AG04449 (cell line): ENCODE measurements at regions of chr14 and their contacts with region 1.

Region 1: DNA sequence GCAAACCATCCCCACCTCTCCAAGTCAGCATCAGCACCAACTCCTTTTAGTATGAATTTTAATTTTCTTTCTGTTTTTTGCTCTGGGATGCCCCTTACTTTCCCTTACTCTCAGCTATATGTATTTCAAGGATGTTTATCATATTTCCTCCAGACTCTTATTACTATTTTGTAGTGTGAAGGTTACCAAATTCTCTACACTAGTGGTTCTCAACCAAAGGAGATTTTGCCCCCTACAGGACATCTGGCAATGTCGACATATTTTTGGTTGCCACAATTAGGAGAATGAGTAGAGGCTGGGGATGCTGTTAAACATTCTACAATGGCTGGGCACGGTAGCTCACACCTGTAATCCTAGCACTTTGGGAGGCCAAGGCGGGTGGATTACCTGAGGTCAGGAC is 29.1 kb upstream of the SOS2 start:
- DNase-seq: no peak
- H3K4me3 ChIP-seq: no peak overlapping the region
- CTCF ChIP-seq: peak; percentile 44

Region 2: DNA sequence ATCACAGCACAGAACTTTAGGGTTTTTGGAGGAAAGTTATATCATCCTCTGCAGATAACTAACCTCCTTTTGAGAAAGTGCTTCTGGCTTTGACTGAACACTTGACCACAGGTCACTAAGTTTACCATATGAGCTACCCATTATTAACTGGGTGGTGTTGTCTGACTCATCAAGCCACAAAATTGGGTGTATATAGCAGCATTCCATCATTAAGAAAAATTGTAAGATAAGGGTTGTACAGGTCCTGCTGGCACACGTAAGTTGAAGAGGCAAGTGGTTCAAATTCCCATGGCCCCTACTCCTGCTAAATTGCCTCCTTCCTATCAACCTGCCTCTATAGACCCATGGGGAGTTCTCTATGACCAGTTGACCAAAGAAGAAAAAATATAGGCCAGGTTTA is 12.0 kb after region 1 on chr14:
- CTCF ChIA-PET with region 1: interaction called, 15 read pairs
- POLR2A ChIA-PET with region 1: no interaction called
- DNase-seq: no peak
- H3K4me3 ChIP-seq: no peak overlapping the region
- CTCF ChIP-seq: no peak

Region 3: DNA sequence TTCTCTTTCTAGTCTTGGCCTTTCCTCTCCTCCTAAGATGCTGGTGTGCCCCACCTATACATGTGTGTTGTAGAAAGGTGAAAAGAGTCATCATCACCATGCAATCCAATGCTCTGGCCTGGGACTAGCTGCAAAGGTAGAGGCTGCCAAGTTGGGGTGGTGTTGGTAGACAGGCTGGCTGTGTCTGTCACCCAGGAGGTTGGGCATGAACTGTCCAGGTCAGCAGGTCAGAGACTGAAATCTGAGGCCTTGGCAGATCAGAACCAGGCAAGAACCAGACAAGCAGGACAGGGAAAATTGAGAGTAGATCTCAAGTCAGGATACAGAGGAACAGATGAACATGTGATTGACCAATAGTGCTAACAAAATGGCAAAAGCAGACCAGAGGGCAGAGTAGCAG is 25.4 kb after region 1 on chr14:
- CTCF ChIA-PET with region 1: interaction called, 10 read pairs
- POLR2A ChIA-PET with region 1: no interaction called
- DNase-seq: no peak
- H3K4me3 ChIP-seq: no peak overlapping the region
- CTCF ChIP-seq: no peak

Region 4: DNA sequence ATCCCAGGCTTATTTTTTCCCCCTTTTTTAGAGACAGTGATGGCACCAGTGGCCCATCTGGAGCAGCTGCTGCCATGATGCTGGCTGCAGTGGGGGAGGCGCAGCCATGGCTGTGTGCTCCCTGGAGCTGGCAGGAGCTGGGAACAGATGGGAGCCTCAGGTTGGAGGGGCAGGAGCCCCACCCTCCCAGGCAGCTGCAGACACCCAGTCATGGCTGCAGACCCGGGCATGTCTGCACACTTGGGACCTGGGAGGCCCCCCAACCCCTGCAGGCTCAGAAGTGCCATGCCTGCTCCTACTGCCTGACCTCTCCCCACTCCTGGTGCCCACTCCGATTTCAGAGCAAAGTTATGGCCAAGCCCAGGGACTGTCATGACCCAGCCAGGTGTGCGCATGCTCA is 111.0 kb after region 1 on chr14:
- CTCF ChIA-PET with region 1: no interaction called
- POLR2A ChIA-PET with region 1: no interaction called
- DNase-seq: no peak
- H3K4me3 ChIP-seq: no peak overlapping the region
- CTCF ChIP-seq: no peak